ENCODE measurements at regions of chr10 and their contacts with region 1.

Region 1: DNA sequence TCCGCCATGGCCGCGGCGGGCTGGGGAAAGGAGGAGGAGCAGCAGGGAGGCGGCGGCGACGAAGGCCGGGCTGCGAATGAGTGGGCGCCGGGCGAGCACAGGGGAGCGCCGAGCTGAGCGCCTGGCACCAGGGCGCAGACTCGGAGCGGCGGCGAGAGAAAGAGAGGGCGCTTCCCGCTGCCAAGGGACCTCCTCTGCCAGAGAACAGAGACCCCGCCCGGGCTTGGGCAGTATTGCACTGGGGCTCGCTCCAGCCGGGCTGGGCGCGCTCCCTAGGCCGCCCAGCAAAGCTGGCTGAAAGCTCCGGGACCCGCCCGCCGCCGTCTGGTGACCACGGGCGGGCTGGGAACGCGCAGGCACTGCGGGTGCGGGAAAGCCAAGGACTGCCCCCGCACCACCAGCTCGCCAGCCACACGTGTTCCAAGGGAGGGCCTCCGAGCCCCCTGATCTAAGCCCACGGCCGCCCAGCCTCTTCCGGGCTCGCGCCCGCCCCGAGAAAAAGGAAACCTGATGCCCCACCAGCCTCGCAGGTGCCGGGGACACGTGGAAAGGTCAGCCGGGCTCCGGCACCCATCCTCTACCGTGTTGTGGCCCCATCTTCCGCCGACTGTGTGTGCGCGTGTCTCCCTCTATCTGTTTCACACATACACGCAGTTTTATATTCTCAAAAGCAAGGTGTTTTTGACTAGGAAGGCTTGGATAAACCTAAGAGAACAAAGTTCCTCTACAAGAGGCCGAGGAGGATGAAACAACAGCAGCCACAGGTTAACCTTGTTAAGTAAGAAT is at the start of gene CCDC6:
- DNase-seq: peak; percentile 93
- H3K4me3 Mint-ChIP-seq: peak within 1 kb of the TSS; percentile 95
- H3K27ac Mint-ChIP-seq: peak within 1 kb of the TSS; percentile 98
- H3K4me1 Mint-ChIP-seq: peaks cover 53% of the 10 kb centered on the region
- H3K27me3 Mint-ChIP-seq: no peaks in the 10 kb centered on the region
- total RNA-seq, gene CCDC6: 43.1 to 44.9 TPM

Region 2: DNA sequence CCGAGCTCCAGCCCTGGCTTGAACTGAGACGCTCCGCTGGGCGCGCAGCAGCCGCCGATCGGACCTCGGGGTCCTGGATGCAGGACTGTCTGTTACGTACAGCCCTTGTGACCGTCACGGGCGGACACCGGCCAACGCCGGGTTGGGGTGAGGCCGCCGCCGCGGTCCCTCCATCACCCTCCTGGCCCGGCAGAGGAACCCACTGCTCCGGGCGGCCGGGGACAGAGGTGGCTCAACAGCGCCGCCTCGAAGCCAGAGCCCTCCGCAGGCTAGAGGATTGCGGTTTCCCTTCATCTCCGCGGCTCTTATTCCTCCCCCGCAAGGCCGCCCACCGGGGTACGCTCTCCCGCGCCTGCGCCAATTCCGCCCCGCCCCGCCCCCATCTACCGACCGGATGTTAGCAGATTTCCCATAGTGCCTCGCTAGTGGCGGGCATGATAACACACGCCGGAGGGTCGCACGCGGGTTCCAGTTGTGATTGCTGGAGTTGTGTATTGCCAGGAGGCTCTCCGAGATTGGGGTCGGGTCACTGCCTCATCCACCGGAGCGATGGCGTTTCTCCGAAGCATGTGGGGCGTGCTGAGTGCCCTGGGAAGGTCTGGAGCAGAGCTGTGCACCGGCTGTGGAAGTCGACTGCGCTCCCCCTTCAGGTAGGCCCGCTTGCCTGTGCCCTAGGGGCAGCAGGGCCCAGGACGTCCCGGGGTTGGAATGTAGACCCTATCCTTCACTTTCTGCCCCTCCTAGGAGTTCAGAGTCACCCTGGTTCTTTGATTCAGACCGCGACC is 1521.4 kb before region 1 on chr10 and contains the start of gene TFAM:
- CTCF ChIA-PET with region 1: no interaction called
- intact Hi-C with region 1: loop called (anchors 2 kb)
- DNase-seq: peak; percentile 98
- H3K4me3 Mint-ChIP-seq: peak within 1 kb of the TSS; percentile 100
- H3K27ac Mint-ChIP-seq: peak within 1 kb of the TSS; percentile 97
- H3K4me1 Mint-ChIP-seq: peaks cover 36% of the 10 kb centered on the region
- H3K27me3 Mint-ChIP-seq: no peaks in the 10 kb centered on the region
- total RNA-seq, gene TFAM: 87.7 to 91.8 TPM

Region 3: DNA sequence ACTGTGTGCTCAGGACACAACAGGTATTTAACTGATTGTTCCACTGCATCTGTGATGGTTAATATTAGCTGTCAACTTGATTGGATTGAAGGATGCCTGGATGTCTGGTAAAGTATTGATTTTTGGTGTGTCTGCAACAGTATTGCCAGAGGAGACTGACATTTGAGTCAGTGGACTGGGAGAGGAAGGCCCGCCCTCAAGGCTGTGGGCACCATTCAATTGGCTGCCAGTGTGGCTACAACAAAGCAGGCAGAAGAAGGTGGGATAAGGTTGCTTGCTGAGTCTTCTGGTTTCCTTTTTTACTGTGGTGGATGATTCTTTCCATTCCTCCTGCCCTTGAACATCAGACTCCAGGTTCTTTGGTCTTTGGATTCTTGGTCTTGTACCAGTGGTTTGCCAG is 407.1 kb before region 1 on chr10:
- CTCF ChIA-PET with region 1: no interaction called
- intact Hi-C with region 1: no loop called
- DNase-seq: no peak
- H3K4me3 Mint-ChIP-seq: no peak overlapping the region
- H3K27ac Mint-ChIP-seq: no peak overlapping the region
- H3K4me1 Mint-ChIP-seq: no peaks in the 10 kb centered on the region
- H3K27me3 Mint-ChIP-seq: no peaks in the 10 kb centered on the region

Region 4: GRCh38 chr10:59702347-59702746 is 204.3 kb before region 1 on chr10:
- CTCF ChIA-PET with region 1: no interaction called
- intact Hi-C with region 1: no loop called
- DNase-seq: no peak
- H3K4me3 Mint-ChIP-seq: no peak overlapping the region
- H3K27ac Mint-ChIP-seq: no peak overlapping the region
- H3K4me1 Mint-ChIP-seq: no peaks in the 10 kb centered on the region
- H3K27me3 Mint-ChIP-seq: peaks cover 40% of the 10 kb centered on the region

Region 5: GRCh38 chr10:59808896-59809643 is 97.5 kb before region 1 on chr10:
- CTCF ChIA-PET with region 1: interaction called, 6 read pairs
- intact Hi-C with region 1: loop called (anchors 1 kb)
- DNase-seq: peak; percentile 90
- H3K4me3 Mint-ChIP-seq: no peak overlapping the region
- H3K27ac Mint-ChIP-seq: no peak overlapping the region
- H3K4me1 Mint-ChIP-seq: no peaks in the 10 kb centered on the region
- H3K27me3 Mint-ChIP-seq: no peaks in the 10 kb centered on the region

Region 6: GRCh38 chr10:59872892-59873463 is 33.6 kb before region 1 on chr10:
- CTCF ChIA-PET with region 1: interaction called, 21 read pairs
- intact Hi-C with region 1: no loop called
- DNase-seq: peak; percentile 39
- H3K4me3 Mint-ChIP-seq: peak overlapping the region; percentile 11
- H3K27ac Mint-ChIP-seq: no peak overlapping the region
- H3K4me1 Mint-ChIP-seq: peaks cover 86% of the 10 kb centered on the region
- H3K27me3 Mint-ChIP-seq: no peaks in the 10 kb centered on the region

Region 7: DNA sequence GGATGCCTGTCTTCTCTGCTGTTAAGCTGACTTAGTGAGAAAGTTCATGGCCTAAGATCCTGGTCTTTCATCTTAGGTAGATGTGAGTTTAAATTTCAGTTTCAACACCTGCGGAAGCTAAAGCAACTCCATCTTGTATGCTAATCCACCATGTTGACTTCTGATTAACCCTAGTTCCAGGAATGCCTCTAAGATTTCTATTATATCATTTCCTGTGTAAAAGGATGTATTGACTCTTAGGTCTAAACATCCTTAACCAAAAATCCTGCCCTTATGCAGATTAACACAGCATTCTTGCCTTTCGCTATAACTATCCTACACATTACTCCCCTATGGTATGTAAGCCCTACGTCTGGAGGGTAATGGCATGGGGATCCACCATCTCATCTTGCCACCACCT is 94.1 kb after region 1 on chr10:
- CTCF ChIA-PET with region 1: no interaction called
- intact Hi-C with region 1: loop called (anchors 1 kb)
- DNase-seq: peak; percentile 10
- H3K4me3 Mint-ChIP-seq: no peak overlapping the region
- H3K27ac Mint-ChIP-seq: peak overlapping the region; percentile 56
- H3K4me1 Mint-ChIP-seq: peaks cover 14% of the 10 kb centered on the region
- H3K27me3 Mint-ChIP-seq: no peaks in the 10 kb centered on the region

Region 8: GRCh38 chr10:60427709-60428386 is 521.2 kb after region 1 on chr10:
- CTCF ChIA-PET with region 1: no interaction called
- intact Hi-C with region 1: loop called (anchors 1 kb)
- DNase-seq: no peak
- H3K4me3 Mint-ChIP-seq: no peak overlapping the region
- H3K27ac Mint-ChIP-seq: no peak overlapping the region
- H3K4me1 Mint-ChIP-seq: peaks cover 5% of the 10 kb centered on the region
- H3K27me3 Mint-ChIP-seq: no peaks in the 10 kb centered on the region

Region 9: GRCh38 chr10:60778214-60779029 is 871.8 kb after region 1 on chr10 and contains the start of gene CDK1:
- CTCF ChIA-PET with region 1: no interaction called
- intact Hi-C with region 1: loop called (anchors 2 kb)
- DNase-seq: peak; percentile 98
- H3K4me3 Mint-ChIP-seq: peak within 1 kb of the TSS; percentile 99
- H3K27ac Mint-ChIP-seq: peak within 1 kb of the TSS; percentile 97
- H3K4me1 Mint-ChIP-seq: peaks cover 21% of the 10 kb centered on the region
- H3K27me3 Mint-ChIP-seq: no peaks in the 10 kb centered on the region
- total RNA-seq, gene CDK1: 173 to 180 TPM